ENCODE measurements at regions of chr2 and their contacts with region 1.

Region 1: DNA sequence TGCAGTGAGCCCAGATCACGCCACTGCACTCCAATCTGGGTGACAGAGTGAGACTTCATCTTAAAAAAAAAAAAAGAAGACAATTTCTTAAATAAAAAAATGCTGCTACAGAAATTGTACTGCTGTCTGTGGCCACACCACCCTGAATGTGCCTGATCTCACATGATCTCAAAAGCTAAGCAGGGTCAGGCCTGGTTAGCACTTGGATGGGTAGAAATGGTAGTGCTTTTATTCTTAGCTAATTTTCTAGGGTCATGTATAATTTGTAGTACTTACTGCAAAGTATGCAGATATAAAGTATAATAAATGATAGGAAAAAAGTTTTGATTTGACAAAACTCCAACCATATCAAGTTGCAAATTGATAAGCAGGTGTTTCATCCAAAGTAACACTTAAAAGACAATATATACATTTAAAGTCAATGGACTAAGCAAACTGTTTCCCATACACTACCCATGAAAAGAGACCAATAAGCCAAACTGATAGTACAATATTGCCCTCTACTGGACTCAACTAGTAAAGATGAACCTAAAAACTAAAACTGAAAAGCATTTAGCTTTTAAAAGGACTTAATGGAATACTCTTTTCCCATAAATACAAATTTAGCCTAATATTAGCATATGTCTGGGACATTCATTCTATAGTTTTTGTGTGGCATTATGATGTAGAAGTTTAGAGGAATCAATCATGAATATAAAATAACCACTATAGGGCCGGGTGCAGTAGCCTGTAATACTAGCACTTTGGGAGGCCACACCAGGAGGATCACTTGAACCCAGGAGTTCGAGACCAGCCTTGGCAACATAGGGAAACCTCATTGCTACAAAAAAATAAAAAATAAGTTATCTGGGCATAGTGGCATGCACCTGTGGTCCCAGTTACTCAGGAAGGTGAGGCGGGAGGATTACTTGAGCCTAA is 18.6 kb upstream of the PEX13 start:
- DNase-seq: no peak
- ATAC-seq: peak; percentile 83
- H3K4me3 Mint-ChIP-seq: no peak overlapping the region
- H3K27ac Mint-ChIP-seq: no peak overlapping the region
- H3K4me1 Mint-ChIP-seq: peaks cover 2% of the 10 kb centered on the region
- H3K27me3 Mint-ChIP-seq: no peaks in the 10 kb centered on the region
- CTCF ChIP-seq: peak; percentile 71

Region 2: GRCh38 chr2:60756191-60757041 is 242.5 kb before region 1 on chr2 and contains the start of gene PAPOLG:
- CTCF ChIA-PET with region 1: interaction called, 11 read pairs
- POLR2A ChIA-PET with region 1: interaction called, 3 read pairs
- intact Hi-C with region 1: no loop called
- DNase-seq: peak; percentile 100
- ATAC-seq: peak; percentile 99
- H3K4me3 Mint-ChIP-seq: peak within 1 kb of the TSS; percentile 91
- H3K27ac Mint-ChIP-seq: peak within 1 kb of the TSS; percentile 95
- H3K4me1 Mint-ChIP-seq: peaks cover 32% of the 10 kb centered on the region
- H3K27me3 Mint-ChIP-seq: no peaks in the 10 kb centered on the region
- CTCF ChIP-seq: no peak
- total RNA-seq, gene PAPOLG: 13.2 to 13.8 TPM

Region 3: DNA sequence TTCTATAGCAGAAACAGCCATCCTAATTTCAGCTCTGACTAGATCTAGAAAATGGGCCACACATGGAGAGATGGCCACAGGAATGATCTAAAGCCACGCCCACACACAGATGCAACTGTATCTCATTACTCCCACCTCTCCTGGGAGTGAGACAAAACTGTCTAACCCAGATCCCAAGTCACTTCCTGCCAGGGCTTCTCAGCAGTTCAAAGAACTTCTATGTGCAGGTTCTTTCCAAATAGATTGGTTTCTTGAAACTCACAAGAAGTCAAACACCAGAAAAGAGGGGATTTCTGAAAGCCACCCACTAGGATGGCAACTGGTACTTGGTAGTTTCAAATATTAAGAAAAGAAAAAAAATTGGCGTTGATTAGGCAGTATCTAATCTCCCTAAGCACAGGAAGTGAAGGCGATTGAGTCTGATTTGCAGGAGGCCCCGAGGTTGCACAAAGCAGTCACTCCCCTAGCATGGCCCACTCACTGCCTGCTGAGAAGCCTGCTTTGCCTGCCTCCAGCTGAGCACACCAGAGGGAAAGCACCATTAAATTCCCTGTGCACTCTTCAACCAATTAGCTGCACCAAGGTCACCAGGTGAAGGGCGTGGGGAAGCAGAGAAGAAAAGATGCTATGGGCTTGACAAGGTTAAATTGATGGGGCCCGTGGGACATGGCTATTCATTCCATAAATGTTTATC is 191.8 kb before region 1 on chr2:
- CTCF ChIA-PET with region 1: interaction called, 73 read pairs
- POLR2A ChIA-PET with region 1: no interaction called
- intact Hi-C with region 1: loop called (anchors 2 kb)
- DNase-seq: peak; percentile 81
- ATAC-seq: peak; percentile 93
- H3K4me3 Mint-ChIP-seq: peak overlapping the region; percentile 26
- H3K27ac Mint-ChIP-seq: peak overlapping the region; percentile 91
- H3K4me1 Mint-ChIP-seq: peaks cover 51% of the 10 kb centered on the region
- H3K27me3 Mint-ChIP-seq: no peaks in the 10 kb centered on the region
- CTCF ChIP-seq: no peak

Region 4: DNA sequence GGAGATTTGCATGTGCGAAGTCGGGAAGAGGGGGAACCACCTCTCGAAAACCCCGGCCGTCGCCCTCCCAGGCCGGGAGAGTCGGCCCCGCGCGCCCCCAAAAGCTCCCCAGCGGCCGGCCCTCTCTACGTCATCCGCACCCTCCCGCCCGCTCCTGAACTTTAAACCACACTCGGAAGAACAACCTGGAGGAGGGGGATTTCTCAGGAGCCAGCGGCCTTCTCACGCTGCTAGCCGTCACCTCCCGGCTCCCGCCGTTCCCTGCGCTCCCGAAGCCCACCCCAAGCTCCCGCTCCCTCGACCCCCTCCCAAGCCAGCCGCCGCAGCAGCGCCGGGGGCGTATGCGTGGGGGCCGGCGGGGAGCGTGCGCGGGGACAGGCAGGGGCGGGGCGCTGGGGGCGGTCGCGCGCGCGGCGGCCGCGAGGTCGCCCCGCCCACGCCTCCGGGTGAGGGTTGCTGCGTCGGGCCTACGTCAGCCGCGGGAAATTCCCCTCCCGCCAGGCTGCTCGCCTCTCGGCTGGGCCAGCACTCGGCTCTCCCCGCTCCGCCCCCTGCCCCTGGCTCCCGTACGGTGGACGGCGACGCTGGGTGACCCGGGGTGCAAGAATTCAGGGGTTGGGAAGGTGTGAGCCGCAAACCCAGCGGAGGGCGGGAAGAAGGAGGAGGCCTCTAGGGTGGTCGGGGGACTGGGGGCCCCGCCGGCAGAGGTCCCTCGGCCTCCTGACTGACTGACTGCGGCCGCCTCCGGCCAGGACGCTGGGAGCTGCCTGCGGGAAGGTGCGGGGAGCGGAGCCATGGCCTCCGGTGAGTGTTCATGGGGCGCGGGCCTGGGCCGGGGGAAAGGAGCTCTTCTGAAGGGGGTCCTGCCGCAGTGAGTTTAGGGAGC is 117.6 kb before region 1 on chr2 and contains the start of gene REL:
- CTCF ChIA-PET with region 1: interaction called, 3 read pairs
- POLR2A ChIA-PET with region 1: interaction called, 3 read pairs
- intact Hi-C with region 1: loop called (anchors 10 kb)
- DNase-seq: peak; percentile 96
- ATAC-seq: peak; percentile 79
- H3K4me3 Mint-ChIP-seq: peak within 1 kb of the TSS; percentile 95
- H3K27ac Mint-ChIP-seq: peak within 1 kb of the TSS; percentile 97
- H3K4me1 Mint-ChIP-seq: peaks cover 25% of the 10 kb centered on the region
- H3K27me3 Mint-ChIP-seq: no peaks in the 10 kb centered on the region
- CTCF ChIP-seq: no peak
- total RNA-seq, gene REL: 84.7 to 85.3 TPM

Region 5: DNA sequence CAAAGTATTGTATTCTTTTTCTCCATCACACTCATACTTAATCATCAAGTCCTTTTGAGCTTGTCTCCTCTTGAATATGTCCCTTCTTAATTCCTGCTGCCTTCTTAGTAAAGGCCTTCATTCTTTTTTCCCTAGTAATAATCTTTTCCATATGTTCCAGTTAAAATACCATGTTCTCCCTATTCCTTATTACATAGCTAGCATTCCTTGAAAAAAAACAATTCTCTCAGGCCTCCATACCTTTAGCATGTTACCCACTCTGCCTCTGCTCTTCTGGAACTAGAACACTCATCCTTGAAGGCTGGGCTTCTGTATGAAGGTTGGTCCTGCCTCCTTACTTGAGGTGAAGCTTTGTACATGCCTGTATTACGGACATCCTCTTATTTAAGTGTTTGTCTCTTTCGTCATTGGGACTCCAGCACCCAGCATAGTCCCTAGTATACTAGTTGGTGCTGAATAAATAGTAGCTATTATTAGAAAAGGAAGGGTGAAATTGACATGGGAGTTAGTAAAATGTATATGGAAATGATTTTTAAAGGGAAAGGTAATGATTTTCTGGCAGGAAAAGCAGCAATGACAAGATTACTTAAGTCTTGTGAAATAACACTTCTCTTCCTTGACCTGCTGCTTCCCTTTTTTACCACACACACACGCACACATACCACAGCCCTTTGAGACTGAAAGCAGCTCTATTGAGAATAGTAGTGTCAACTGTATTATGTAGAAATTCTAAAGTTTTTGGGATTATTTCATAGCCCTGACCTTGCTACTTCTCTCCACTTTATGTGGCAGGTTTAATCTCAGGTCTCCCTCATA is 71.9 kb before region 1 on chr2:
- CTCF ChIA-PET with region 1: interaction called, 10 read pairs
- POLR2A ChIA-PET with region 1: no interaction called
- intact Hi-C with region 1: no loop called
- DNase-seq: no peak
- ATAC-seq: no peak
- H3K4me3 Mint-ChIP-seq: no peak overlapping the region
- H3K27ac Mint-ChIP-seq: no peak overlapping the region
- H3K4me1 Mint-ChIP-seq: peaks cover 3% of the 10 kb centered on the region
- H3K27me3 Mint-ChIP-seq: no peaks in the 10 kb centered on the region
- CTCF ChIP-seq: no peak

Region 6: GRCh38 chr2:60987041-60987440 is 11.8 kb before region 1 on chr2:
- CTCF ChIA-PET with region 1: interaction called, 11 read pairs
- POLR2A ChIA-PET with region 1: no interaction called
- intact Hi-C with region 1: no loop called
- DNase-seq: no peak
- ATAC-seq: no peak
- H3K4me3 Mint-ChIP-seq: no peak overlapping the region
- H3K27ac Mint-ChIP-seq: no peak overlapping the region
- H3K4me1 Mint-ChIP-seq: no peaks in the 10 kb centered on the region
- H3K27me3 Mint-ChIP-seq: no peaks in the 10 kb centered on the region
- CTCF ChIP-seq: no peak